ENCODE measurements at regions of chr11 and their contacts with region 1.

Region 1: GRCh38 chr11:117026593-117027330 is 71.5 kb downstream of the SIK3 start:
- DNase-seq: no peak
- H3K4me3 Mint-ChIP-seq: peak overlapping the region; percentile 43
- H3K27ac Mint-ChIP-seq: peak overlapping the region; percentile 92
- H3K4me1 Mint-ChIP-seq: peaks cover 63% of the 10 kb centered on the region
- H3K27me3 Mint-ChIP-seq: no peaks in the 10 kb centered on the region

Region 2: GRCh38 chr11:116948391-116948790 is 78.4 kb before region 1 on chr11:
- intact Hi-C with region 1: loop called (anchors 2 kb)
- DNase-seq: no peak
- H3K4me3 Mint-ChIP-seq: no peak overlapping the region
- H3K27ac Mint-ChIP-seq: no peak overlapping the region
- H3K4me1 Mint-ChIP-seq: peaks cover 18% of the 10 kb centered on the region
- H3K27me3 Mint-ChIP-seq: no peaks in the 10 kb centered on the region

Region 3: DNA sequence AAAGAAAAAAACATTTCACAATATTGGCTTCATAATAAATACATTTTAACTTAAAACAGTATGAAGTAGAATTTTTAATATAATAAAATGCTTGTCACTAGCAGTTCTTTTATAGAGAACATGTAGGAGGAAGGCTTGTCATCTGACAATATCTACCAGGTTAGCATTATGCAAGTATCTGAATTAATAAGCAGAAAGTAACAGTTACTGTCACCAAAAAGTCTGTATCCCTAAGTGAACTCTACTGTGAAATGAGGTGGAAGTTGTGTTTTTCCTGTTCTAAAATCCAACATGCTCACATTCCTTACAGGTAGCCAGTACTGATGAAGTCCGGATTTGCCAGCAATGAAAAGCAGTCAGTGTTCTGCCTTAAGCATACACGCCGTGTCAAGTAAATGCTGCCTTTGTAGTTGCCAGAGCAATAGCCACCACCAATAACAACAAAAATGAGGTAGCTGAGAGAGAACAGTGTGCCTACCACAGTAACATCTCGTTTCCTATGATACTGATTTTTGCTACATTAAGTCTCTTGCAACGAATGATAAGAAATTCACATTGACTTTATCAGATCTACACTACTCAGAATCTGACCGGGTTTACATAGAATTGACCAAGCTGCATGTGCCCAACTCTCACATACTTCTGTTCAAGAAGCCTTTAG is 24.0 kb before region 1 on chr11:
- intact Hi-C with region 1: loop called (anchors 1 kb)
- DNase-seq: peak; percentile 47
- H3K4me3 Mint-ChIP-seq: no peak overlapping the region
- H3K27ac Mint-ChIP-seq: peak overlapping the region; percentile 91
- H3K4me1 Mint-ChIP-seq: peaks cover 59% of the 10 kb centered on the region
- H3K27me3 Mint-ChIP-seq: no peaks in the 10 kb centered on the region

Region 4: DNA sequence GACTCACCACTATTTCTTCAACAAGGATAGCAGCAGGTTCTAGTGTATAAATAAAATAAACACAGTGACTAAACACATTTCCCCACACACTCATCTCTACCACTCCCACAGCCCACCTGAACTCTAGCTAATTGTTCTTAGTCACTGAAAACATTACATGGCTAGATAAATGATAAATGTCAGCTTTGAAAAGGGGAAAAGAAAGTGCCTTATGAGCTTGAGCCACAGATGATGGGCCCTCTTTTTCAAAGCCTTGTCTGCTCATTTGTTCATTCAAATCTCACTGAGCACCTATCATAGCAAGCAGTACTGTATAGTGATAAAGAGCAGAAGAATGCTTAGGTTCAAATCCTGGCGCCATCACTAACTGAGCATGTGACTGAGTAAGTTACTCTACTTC is 13.1 kb after region 1 on chr11:
- intact Hi-C with region 1: loop called (anchors 1 kb)
- DNase-seq: no peak
- H3K4me3 Mint-ChIP-seq: no peak overlapping the region
- H3K27ac Mint-ChIP-seq: no peak overlapping the region
- H3K4me1 Mint-ChIP-seq: peaks cover 60% of the 10 kb centered on the region
- H3K27me3 Mint-ChIP-seq: no peaks in the 10 kb centered on the region

Region 5: GRCh38 chr11:117072517-117073461 is 46.0 kb after region 1 on chr11:
- intact Hi-C with region 1: loop called (anchors 2 kb)
- DNase-seq: no peak
- H3K4me3 Mint-ChIP-seq: no peak overlapping the region
- H3K27ac Mint-ChIP-seq: no peak overlapping the region
- H3K4me1 Mint-ChIP-seq: peaks cover 41% of the 10 kb centered on the region
- H3K27me3 Mint-ChIP-seq: no peaks in the 10 kb centered on the region

Region 6: GRCh38 chr11:117098269-117099232 is 71.8 kb after region 1 on chr11 and contains the start of gene SIK3:
- intact Hi-C with region 1: loop called (anchors 1 kb)
- DNase-seq: peak; percentile 87
- H3K4me3 Mint-ChIP-seq: peak within 1 kb of the TSS; percentile 98
- H3K27ac Mint-ChIP-seq: peak within 1 kb of the TSS; percentile 90
- H3K4me1 Mint-ChIP-seq: peaks cover 48% of the 10 kb centered on the region
- H3K27me3 Mint-ChIP-seq: peaks cover 6% of the 10 kb centered on the region
- total RNA-seq, gene SIK3: 25.3 and 25.6 TPM in 2 replicates